H1 (cell line): ENCODE measurements at regions of chr20 and their contacts with region 1.

Region 1: GRCh38 chr20:9407805-9408421 is 106.5 kb upstream of the LAMP5 start:
- DNase-seq: peak; percentile 7 to 81
- H3K4me3 ChIP-seq: no peak overlapping the region
- H3K27ac ChIP-seq: no peak overlapping the region
- H3K4me1 ChIP-seq: no peaks in the 10 kb centered on the region
- H3K27me3 ChIP-seq: no peaks in the 10 kb centered on the region
- CTCF ChIP-seq: peak in 2 of 3 experiments; percentile 78 to 85; a peak in 3 of 4 replicates
- EP300 ChIP-seq: no peak
- POLR2A ChIP-seq: no peak
- RAD21 ChIP-seq: peak; percentile 94

Region 2: GRCh38 chr20:9422335-9423057 is 14.6 kb after region 1 on chr20:
- CTCF ChIA-PET with region 1: interaction called, 59 read pairs
- POLR2A ChIA-PET with region 1: interaction called, 3 read pairs
- DNase-seq: no peak
- H3K4me3 ChIP-seq: no peak overlapping the region
- H3K27ac ChIP-seq: no peak overlapping the region
- H3K4me1 ChIP-seq: no peaks in the 10 kb centered on the region
- H3K27me3 ChIP-seq: no peaks in the 10 kb centered on the region
- CTCF ChIP-seq: no peak
- EP300 ChIP-seq: no peak
- POLR2A ChIP-seq: no peak
- RAD21 ChIP-seq: no peak

Region 3: GRCh38 chr20:9447182-9447581 is 39.3 kb after region 1 on chr20:
- CTCF ChIA-PET with region 1: interaction called, 24 read pairs
- POLR2A ChIA-PET with region 1: no interaction called
- DNase-seq: no peak
- H3K4me3 ChIP-seq: no peak overlapping the region
- H3K27ac ChIP-seq: no peak overlapping the region
- H3K4me1 ChIP-seq: no peaks in the 10 kb centered on the region
- H3K27me3 ChIP-seq: no peaks in the 10 kb centered on the region
- CTCF ChIP-seq: no peak
- EP300 ChIP-seq: no peak
- POLR2A ChIP-seq: no peak
- RAD21 ChIP-seq: no peak

Region 4: GRCh38 chr20:9474835-9475415 is 67.0 kb after region 1 on chr20:
- CTCF ChIA-PET with region 1: interaction called, 10 read pairs
- POLR2A ChIA-PET with region 1: no interaction called
- DNase-seq: no peak
- H3K4me3 ChIP-seq: no peak overlapping the region
- H3K27ac ChIP-seq: no peak overlapping the region
- H3K4me1 ChIP-seq: no peaks in the 10 kb centered on the region
- H3K27me3 ChIP-seq: no peaks in the 10 kb centered on the region
- CTCF ChIP-seq: no peak
- EP300 ChIP-seq: no peak
- POLR2A ChIP-seq: no peak
- RAD21 ChIP-seq: no peak

Region 5: DNA sequence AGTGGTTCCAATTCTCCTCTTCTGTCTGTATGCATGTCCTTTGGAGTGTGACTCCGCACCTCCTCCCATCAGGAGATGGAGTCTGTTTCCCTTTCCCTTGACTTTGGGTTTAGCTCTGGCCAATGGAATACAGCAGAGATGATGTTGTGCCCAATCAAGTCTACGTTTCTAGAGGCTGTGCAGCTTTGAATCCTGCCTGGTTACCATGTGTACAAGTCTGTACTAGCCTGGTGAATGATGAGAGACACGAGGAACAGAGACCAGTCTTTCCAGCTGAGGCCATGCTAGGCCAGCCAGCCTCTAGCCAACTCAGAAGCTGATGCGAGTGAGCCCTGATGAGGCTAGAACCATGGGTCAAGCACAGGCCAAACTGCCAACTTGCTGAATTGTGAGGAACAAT is 189.6 kb after region 1 on chr20:
- CTCF ChIA-PET with region 1: interaction called, 30 read pairs
- POLR2A ChIA-PET with region 1: no interaction called
- DNase-seq: no peak
- H3K4me3 ChIP-seq: no peak overlapping the region
- H3K27ac ChIP-seq: no peak overlapping the region
- H3K4me1 ChIP-seq: peaks cover 0 to 4% (median 0%) of the 10 kb centered on the region in 4 experiments; a peak in 1 of 7 replicates
- H3K27me3 ChIP-seq: no peaks in the 10 kb centered on the region
- CTCF ChIP-seq: no peak
- EP300 ChIP-seq: no peak
- POLR2A ChIP-seq: no peak
- RAD21 ChIP-seq: no peak

Region 6: DNA sequence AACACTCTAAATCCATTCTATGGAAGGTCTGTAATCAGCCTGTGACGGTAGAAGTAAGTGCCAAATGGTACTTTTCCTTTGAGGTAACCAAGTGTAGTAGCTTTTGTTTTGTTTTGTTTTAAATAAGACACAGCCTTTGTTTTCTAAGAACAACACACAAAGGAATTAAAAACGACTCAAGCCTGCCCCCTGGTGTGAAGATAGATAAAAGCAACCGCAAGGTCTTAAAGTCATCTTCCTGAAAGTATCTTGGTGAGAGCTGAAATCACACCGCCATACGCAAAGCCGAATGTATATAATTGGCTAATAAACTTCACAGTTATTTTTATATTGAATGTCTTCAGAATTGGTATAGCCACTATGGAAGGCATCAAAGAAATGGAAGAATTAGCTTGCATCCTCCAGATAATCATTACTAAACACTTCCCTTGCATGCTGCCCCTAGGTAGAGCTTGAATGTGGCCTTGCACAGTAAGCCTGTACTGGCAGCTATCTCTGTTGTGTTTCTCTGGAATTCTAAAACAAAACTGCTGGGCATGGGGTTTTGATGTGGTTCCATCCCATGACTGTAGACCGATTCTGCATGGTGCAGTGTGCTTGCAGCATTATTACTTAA is 202.1 kb after region 1 on chr20:
- CTCF ChIA-PET with region 1: interaction called, 132 read pairs
- POLR2A ChIA-PET with region 1: no interaction called
- DNase-seq: peak; percentile 31 to 73
- H3K4me3 ChIP-seq: no peak overlapping the region
- H3K27ac ChIP-seq: no peak overlapping the region
- H3K4me1 ChIP-seq: peaks cover 0 to 2% (median 0%) of the 10 kb centered on the region in 4 experiments; a peak in 1 of 7 replicates
- H3K27me3 ChIP-seq: no peaks in the 10 kb centered on the region; a peak in 2 of 7 replicates
- CTCF ChIP-seq: peak in 2 of 3 experiments; percentile 49 to 64; a peak in 3 of 4 replicates
- EP300 ChIP-seq: no peak
- POLR2A ChIP-seq: no peak
- RAD21 ChIP-seq: peak; percentile 76 to 84